Activated CD4-positive, alpha-beta memory T cell treated with anti-CD3 and anti-CD28 coated beads for 36 hours (primary cell): ENCODE measurements at regions of chr6 and their contacts with region 1.

Region 1: GRCh38 chr6:157461000-157461915 is 80.3 kb downstream of the ZDHHC14 start:
- DNase-seq: peak; percentile 89
- H3K4me3 Mint-ChIP-seq: no peak overlapping the region
- H3K27ac Mint-ChIP-seq: peak overlapping the region; percentile 75
- H3K4me1 Mint-ChIP-seq: peaks cover 40% of the 10 kb centered on the region
- H3K27me3 Mint-ChIP-seq: peaks cover 7% of the 10 kb centered on the region

Region 2: GRCh38 chr6:157298216-157298724 is 163.0 kb before region 1 on chr6:
- CTCF ChIA-PET with region 1: no interaction called
- POLR2A ChIA-PET with region 1: no interaction called
- intact Hi-C with region 1: no loop called
- DNase-seq: no peak
- H3K4me3 Mint-ChIP-seq: no peak overlapping the region
- H3K27ac Mint-ChIP-seq: no peak overlapping the region
- H3K4me1 Mint-ChIP-seq: peaks cover 3% of the 10 kb centered on the region
- H3K27me3 Mint-ChIP-seq: no peaks in the 10 kb centered on the region

Region 3: GRCh38 chr6:157368359-157369049 is 92.8 kb before region 1 on chr6:
- CTCF ChIA-PET with region 1: no interaction called
- POLR2A ChIA-PET with region 1: no interaction called
- intact Hi-C with region 1: no loop called
- DNase-seq: no peak
- H3K4me3 Mint-ChIP-seq: no peak overlapping the region
- H3K27ac Mint-ChIP-seq: no peak overlapping the region
- H3K4me1 Mint-ChIP-seq: peaks cover 19% of the 10 kb centered on the region
- H3K27me3 Mint-ChIP-seq: peaks cover 35% of the 10 kb centered on the region

Region 4: DNA sequence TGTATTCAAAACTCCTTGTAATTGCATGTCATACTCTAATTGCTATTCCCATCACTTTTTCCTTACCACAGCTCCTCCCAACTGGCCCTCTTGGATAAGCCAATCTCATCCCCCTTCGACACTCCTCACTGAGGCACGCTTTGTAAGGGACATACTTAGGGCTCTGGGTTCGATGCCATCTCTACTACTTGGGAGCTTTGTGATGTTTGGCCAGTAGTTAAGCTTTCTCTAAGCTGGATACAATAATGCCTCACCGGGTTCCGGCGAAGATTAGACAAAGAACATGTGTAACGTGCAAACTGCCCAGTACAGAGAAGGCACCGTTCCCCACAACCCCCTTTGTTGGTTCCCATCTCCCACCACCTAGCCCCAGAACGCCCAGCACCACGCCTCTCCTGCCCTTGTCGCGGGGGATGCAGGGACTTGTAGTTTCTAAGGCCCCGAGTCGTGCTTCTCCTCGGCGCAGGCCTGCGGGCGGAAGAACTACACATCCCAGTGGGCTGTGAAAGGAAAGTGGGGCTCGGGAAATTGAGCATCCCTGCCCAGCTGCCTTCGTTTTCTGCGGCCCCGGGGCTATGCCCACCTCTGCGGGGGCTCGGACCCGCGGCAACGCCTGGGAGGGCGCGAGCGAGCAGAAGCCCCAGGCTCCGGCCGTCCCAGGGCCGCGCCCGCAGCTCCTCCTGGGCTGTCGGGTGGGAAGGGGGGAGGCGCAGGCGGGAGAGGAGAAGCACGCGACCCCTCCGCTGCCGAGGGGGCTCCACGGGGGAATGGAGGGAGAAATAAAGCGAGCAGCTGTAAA is 81.4 kb before region 1 on chr6:
- CTCF ChIA-PET with region 1: no interaction called
- POLR2A ChIA-PET with region 1: interaction called, 4 read pairs
- intact Hi-C with region 1: loop called (anchors 2 kb)
- DNase-seq: peak; percentile 93
- H3K4me3 Mint-ChIP-seq: peak overlapping the region; percentile 78
- H3K27ac Mint-ChIP-seq: peak overlapping the region; percentile 71
- H3K4me1 Mint-ChIP-seq: peaks cover 31% of the 10 kb centered on the region
- H3K27me3 Mint-ChIP-seq: peaks cover 9% of the 10 kb centered on the region

Region 5: DNA sequence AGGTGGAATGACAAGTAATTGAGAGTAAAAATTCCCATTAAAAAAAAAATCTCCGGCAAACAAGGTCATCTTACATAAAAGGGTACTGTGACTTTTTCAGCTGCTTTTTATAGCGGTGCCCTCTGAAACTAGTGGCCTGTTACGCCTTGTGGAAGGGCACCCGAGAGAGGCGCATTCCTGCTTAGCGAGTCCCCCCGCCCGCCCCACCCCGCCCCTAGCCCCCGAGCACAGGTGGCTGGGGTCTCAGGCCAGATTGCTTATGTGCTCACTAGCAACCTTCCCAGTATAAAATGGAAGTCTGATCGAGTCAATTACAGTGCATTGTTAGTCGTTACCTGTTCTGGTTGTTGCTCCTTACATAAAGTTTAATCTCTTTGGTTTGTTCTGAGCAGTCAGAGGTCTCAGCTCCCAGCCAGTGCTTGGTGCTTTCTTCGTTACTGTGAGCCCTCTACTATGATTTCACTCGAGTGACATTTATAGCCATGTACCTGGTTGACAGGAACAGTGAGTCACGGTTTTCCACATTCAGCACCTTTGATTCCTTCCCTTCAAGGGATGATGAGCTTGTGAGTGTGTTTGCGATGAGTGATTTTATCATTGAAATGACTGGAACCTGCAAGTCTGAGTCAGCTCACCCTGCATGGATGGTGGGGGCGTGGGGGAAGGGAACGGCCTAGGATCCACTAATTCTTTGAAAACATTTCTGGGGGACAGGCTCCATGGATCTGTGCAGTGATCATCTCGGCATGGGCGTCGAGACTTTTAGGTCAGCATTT is 32.6 kb before region 1 on chr6:
- CTCF ChIA-PET with region 1: interaction called, 6 read pairs
- POLR2A ChIA-PET with region 1: interaction called, 6 read pairs
- intact Hi-C with region 1: loop called (anchors 1 kb)
- DNase-seq: peak; percentile 88
- H3K4me3 Mint-ChIP-seq: no peak overlapping the region
- H3K27ac Mint-ChIP-seq: peak overlapping the region; percentile 74
- H3K4me1 Mint-ChIP-seq: peaks cover 37% of the 10 kb centered on the region
- H3K27me3 Mint-ChIP-seq: peaks cover 10% of the 10 kb centered on the region

Region 6: DNA sequence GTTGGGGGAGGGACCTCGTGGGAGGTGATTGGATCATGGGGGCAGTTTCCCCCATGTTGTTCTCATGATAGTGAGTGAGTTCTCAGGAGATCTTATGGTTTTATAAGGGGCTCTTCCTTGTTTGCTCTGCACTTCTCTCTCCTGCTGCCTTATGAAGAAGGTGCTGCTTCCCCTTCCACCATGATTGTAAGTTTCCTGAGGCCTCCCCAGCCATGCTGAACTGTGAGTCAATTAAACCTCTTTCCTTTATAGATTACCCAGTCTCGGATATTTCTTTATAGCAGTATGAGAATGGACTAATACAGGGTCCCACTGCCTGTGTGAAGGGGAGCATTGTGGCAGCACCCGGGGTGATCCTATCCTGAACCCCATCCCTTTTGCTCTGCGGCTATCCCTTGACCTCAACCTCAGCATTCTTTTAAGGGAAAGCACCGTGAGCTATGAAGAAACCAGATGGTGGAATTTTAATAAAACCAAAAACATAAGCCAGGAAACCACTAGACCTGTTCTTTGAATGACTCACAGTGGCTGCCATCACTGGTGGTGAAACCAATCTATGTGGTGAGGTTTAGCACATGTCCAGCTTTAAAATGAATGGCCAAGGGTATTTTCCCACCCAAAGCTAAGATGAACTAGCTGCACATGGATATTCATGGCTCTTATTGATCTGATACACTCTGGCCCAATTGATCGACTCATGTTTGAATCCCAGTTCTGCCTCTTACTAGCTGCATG is 18.0 kb before region 1 on chr6:
- CTCF ChIA-PET with region 1: no interaction called
- POLR2A ChIA-PET with region 1: interaction called, 3 read pairs
- intact Hi-C with region 1: loop called (anchors 1 kb)
- DNase-seq: peak; percentile 49
- H3K4me3 Mint-ChIP-seq: no peak overlapping the region
- H3K27ac Mint-ChIP-seq: peak overlapping the region; percentile 0
- H3K4me1 Mint-ChIP-seq: peaks cover 16% of the 10 kb centered on the region
- H3K27me3 Mint-ChIP-seq: peaks cover 2% of the 10 kb centered on the region

Region 7: DNA sequence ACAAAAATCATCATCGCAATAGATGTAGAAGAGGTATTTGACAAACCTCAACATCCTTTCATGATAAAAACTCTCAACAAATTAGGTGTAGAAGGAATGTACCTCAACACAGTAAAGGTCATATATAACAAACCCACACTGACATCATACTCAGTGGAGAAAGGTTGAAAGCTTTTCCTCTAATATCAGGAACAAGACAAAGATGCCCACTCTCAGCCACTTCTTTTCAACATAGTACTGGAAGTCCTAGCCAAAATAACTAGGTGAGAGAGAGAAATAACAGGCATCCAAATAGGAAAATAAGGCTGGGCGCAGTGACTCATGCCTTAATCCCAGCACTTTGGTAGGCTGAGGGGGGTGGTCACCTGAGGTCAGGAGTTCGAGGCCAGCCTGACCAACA is 15.5 kb after region 1 on chr6:
- CTCF ChIA-PET with region 1: no interaction called
- POLR2A ChIA-PET with region 1: no interaction called
- intact Hi-C with region 1: no loop called
- DNase-seq: no peak
- H3K4me3 Mint-ChIP-seq: no peak overlapping the region
- H3K27ac Mint-ChIP-seq: no peak overlapping the region
- H3K4me1 Mint-ChIP-seq: peaks cover 11% of the 10 kb centered on the region
- H3K27me3 Mint-ChIP-seq: peaks cover 9% of the 10 kb centered on the region

Region 8: DNA sequence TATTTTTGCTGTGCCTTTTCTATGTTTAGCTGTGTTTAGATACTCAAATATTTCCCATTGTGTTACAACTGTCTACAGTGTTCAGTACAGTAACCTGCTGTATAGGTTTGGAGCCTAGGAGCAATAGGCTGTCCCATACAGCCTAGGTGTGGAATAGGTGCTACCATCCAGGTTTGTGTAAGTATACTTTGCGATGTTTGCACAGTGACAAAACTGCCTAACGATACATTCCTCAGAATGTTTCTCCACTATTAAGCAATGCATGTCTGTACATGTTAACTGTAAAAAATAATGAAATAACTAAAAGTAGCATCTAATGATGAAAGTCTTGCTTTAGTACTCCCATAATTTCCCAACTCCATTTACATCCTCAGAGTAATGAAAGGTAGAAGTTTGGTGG is 660.8 kb after region 1 on chr6:
- CTCF ChIA-PET with region 1: no interaction called
- POLR2A ChIA-PET with region 1: no interaction called
- intact Hi-C with region 1: no loop called
- DNase-seq: no peak
- H3K4me3 Mint-ChIP-seq: no peak overlapping the region
- H3K27ac Mint-ChIP-seq: no peak overlapping the region
- H3K4me1 Mint-ChIP-seq: no peaks in the 10 kb centered on the region
- H3K27me3 Mint-ChIP-seq: no peaks in the 10 kb centered on the region